Testis (tissue), 5 donors: ENCODE measurements at regions of chr2 and their contacts with region 1.

Region 1: GRCh38 chr2:114628481-114628880 is 186.0 kb downstream of the DPP10 start:
- DNase-seq: no peak
- H3K4me3 ChIP-seq: no peak overlapping the region
- H3K27ac ChIP-seq: no peak overlapping the region
- H3K4me1 ChIP-seq: no peaks in the 10 kb centered on the region
- H3K27me3 ChIP-seq: no peaks in the 10 kb centered on the region
- CTCF ChIP-seq: no peak
- POLR2A ChIP-seq: no peak

Region 2: DNA sequence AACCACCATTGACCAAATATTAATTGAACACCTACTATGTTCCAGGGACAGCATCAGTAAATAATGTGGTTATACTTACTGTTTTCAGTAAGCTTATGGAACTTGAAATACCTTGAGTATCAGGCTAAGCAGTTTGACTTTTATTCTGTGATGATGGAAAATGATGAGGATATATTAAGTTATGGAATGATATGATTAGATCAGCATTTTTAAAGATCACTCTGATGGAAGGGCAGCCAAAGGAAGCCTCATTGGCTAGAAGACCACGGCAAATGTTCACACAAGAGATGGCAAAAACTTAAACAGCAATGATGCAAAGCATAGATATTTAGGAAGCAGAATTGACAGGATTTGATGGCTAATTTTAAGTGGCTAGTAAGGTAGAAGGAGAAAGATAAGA is 453.0 kb before region 1 on chr2:
- intact Hi-C with region 1: no loop called
- DNase-seq: no peak
- H3K4me3 ChIP-seq: no peak overlapping the region
- H3K27ac ChIP-seq: no peak overlapping the region
- H3K4me1 ChIP-seq: no peaks in the 10 kb centered on the region
- H3K27me3 ChIP-seq: no peaks in the 10 kb centered on the region
- CTCF ChIP-seq: no peak
- POLR2A ChIP-seq: no peak

Region 3: DNA sequence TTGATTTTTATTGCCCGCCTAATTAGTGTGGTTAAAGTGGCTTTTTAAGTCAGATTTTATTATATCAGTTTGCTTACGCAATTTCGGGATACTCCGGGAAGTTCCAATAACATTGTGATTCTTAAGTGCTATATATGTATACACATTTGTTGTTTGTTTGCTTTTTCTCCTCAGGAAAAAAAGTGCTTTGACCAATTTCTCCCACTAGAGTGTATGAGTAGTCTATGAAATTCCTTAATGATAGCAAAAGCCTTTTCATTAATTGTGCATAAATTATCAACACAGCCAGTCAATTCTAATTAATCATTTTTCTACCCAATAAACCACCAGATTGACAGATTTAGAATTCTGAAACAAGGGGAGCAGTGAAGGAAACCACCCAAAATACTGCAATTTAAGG is 13.9 kb before region 1 on chr2:
- intact Hi-C with region 1: loop called (anchors 1 kb)
- DNase-seq: no peak
- H3K4me3 ChIP-seq: no peak overlapping the region
- H3K27ac ChIP-seq: no peak overlapping the region
- H3K4me1 ChIP-seq: no peaks in the 10 kb centered on the region
- H3K27me3 ChIP-seq: no peaks in the 10 kb centered on the region
- CTCF ChIP-seq: no peak
- POLR2A ChIP-seq: no peak